A549 (cell line): ENCODE measurements at regions of chr11 and their contacts with region 1.

Region 1: GRCh38 chr11:62143727-62144126 is 19.9 kb downstream of the INCENP start:
- DNase-seq: no peak
- ATAC-seq: peak in 1 of 2 experiments; percentile 28; a peak in 2 of 6 replicates
- H3K4me3 ChIP-seq: no peak overlapping the region
- H3K27ac ChIP-seq: no peak overlapping the region
- H3K4me1 ChIP-seq: no peaks in the 10 kb centered on the region
- CTCF ChIP-seq: no peak
- EP300 ChIP-seq: no peak
- POLR2A ChIP-seq: no peak
- RAD21 ChIP-seq: no peak

Region 2: DNA sequence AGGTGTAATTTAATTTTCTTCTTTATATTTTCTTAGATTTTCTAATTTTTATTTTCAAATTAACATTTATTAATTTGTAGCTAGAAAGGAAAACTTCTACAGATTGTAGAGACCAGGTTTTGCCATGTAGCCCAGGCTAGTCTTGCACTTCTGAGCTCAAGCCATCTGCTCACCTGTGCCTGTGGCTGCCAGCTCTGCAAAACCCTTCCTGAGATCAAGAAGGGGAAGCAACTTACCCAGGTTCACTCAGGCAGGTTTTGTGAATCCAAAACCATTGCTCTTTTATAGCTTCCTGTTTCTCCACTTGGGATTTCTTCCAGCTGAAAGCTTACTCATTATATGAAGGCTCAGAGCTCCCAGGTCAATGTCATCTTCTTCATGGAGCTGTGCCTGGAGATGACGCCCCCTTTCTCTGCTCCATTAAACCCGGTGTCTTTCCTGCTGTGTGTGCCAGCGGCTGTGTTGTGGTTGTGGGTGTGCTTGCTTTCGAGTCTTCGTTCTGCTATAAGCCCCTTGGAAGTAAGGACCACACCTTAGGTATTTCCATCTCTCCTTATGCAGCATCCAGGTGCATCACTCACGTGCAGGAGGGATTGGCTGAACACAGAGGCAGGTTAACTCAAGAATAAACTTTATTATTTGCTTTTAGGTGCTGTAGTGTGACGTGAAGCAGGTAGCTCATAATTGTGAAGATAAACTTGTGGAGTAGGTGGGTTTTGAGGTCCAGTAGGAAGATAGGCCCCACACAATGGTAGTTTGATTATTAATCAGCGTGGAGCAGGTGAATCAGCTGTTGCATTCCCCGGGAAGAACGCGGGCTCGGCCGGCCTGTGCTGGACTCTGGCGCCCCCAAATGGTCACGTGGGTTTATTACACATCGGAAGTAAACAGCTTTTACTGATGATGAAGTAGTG is 62.1 kb before region 1 on chr11:
- CTCF ChIA-PET with region 1: no interaction called
- POLR2A ChIA-PET with region 1: no interaction called
- DNase-seq: peak; percentile 72 to 76
- ATAC-seq: peak; percentile 89 to 94
- H3K4me3 ChIP-seq: no peak overlapping the region
- H3K27ac ChIP-seq: peak overlapping the region; percentile 20 to 66; a peak in 5 of 6 replicates
- H3K4me1 ChIP-seq: peaks cover 9% of the 10 kb centered on the region; the same call in 2 of the 3 replicates
- CTCF ChIP-seq: peak; percentile 96
- EP300 ChIP-seq: no peak
- POLR2A ChIP-seq: no peak
- RAD21 ChIP-seq: peak; percentile 98 to 99

Region 3: GRCh38 chr11:62132188-62132587 is 11.5 kb before region 1 on chr11:
- CTCF ChIA-PET with region 1: interaction called, 10 read pairs
- POLR2A ChIA-PET with region 1: no interaction called
- DNase-seq: no peak
- ATAC-seq: 0 out of 6 replicates have a peak, but pooled peaks of 1 of the 2 experiments have one; percentile 19
- H3K4me3 ChIP-seq: no peak overlapping the region
- H3K27ac ChIP-seq: no peak overlapping the region
- H3K4me1 ChIP-seq: peaks cover 6% of the 10 kb centered on the region; the same call in 1 of the 3 replicates
- CTCF ChIP-seq: no peak
- EP300 ChIP-seq: no peak
- POLR2A ChIP-seq: no peak
- RAD21 ChIP-seq: no peak